Colonic mucosa (tissue), 4 donors: ENCODE measurements at regions of chr6 and their contacts with region 1.

Region 1: DNA sequence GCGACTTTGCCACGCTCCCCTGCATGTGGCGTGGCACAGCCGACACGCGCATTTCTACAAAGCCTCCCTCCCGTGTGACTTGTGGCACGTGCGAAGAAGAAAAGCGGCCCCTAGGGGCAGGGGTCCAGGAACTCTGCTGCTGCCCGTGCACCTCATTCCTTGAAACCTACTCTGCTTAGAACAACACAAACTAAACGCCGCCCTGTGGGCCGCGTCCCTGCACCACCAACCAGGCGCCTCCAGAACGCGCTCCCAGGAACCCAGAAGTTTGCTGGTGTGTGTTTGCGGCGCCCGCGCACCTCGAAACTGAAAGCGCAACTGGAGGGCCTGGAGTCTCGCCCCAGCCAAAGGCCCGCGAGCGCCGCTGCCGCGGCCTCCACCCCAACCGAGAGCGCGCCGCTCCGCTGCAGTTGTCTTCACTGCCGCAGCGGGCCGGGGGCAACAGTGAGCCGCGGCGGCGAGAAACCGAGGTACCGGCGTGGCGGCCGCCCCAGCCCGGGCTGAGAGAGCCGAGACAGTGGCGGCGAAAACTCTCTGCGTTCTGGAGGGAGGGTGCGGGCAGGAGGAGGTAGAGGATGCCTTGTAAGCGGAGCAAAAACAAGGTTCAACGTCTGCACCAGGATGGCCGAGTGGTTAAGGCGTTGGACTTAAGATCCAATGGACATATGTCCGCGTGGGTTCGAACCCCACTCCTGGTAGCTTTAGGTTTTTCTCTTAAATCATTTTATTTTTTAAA is 65.8 kb downstream of the STX11 start:
- DNase-seq: peak; percentile 95
- H3K4me3 ChIP-seq: peak overlapping the region; percentile 57
- H3K27ac ChIP-seq: peak overlapping the region; percentile 97
- H3K4me1 ChIP-seq: peaks cover 5% of the 10 kb centered on the region
- H3K27me3 ChIP-seq: no peaks in the 10 kb centered on the region
- CTCF ChIP-seq: peak; percentile 42

Region 2: DNA sequence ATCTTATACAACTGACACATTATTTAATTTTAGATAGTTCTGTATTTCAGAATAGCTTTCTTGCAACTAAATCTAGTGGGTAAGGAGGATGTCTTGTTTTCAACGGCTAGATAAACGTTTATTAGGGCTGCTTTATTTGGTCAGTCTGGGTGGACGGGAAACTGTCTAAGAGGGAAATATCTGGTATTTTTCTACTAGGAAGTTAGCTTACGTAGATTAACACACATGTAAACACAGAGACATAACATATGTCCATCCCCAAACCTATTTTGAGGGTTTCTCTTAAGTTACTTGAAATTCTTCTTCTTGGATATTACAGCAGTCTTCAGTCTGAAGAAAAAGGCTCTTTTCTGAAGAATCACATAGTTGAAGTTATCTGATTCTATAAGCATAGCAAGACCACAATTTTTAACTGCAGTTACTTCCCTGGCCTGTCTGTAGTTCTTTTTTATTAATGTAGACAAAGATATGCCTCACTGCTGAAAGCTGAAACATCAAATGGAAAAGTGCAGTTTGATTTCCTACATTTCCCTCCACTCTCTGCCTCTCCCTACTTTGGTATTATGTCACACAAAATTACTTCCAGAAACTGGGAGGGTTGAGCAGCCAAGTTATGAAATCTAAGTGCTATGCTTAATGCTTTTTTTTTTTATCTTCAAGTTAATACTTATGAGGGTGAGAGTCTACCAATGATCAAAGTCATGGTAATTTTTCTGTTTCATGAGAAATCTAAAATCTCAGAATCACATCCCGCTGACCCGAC is 245.5 kb before region 1 on chr6:
- intact Hi-C with region 1: no loop called
- DNase-seq: no peak
- H3K4me3 ChIP-seq: no peak overlapping the region
- H3K27ac ChIP-seq: no peak overlapping the region
- H3K4me1 ChIP-seq: peaks cover 4% of the 10 kb centered on the region
- H3K27me3 ChIP-seq: no peaks in the 10 kb centered on the region
- CTCF ChIP-seq: no peak

Region 3: GRCh38 chr6:144104898-144105487 is 111.1 kb before region 1 on chr6:
- intact Hi-C with region 1: loop called (anchors 5 kb)
- DNase-seq: peak; percentile 51
- H3K4me3 ChIP-seq: no peak overlapping the region
- H3K27ac ChIP-seq: no peak overlapping the region
- H3K4me1 ChIP-seq: no peaks in the 10 kb centered on the region
- H3K27me3 ChIP-seq: no peaks in the 10 kb centered on the region
- CTCF ChIP-seq: peak; percentile 55

Region 4: DNA sequence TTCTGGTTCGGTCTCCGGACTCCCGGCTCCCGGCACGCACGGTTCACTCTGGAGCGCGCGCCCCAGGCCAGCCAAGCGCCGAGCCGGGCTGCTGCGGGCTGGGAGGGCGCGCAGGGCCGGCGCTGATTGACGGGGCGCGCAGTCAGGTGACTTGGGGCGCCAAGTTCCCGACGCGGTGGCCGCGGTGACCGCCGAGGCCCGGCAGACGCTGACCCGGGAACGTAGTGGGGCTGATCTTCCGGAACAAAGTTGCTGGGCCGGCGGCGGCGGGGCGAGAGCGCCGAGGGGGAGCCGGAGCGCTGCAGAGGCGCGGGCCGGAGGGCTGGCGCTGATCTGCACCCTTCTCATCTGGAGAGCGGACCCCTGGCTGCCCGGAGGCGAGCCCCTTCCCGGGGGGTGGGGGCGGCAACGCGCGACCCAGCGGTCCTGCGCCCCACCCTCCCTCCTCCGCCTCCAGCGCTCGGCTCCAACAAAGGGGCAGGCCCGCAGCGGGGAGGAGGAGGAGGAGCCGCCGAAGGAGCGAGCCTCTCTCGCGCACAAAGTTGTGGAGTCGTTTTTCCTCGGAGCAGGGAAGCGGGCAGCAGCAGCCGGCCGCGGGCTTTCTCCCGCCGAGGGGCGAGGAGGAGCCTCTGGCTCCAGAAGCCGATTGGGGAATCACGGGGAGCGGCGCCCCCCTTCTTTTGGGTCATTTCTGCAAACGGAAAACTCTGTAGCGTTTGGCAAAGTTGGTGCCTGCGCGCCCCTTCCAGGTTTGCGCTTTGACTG is 68.9 kb after region 1 on chr6 and contains the start of gene UTRN:
- intact Hi-C with region 1: loop called (anchors 5 kb)
- DNase-seq: peak; percentile 87
- H3K4me3 ChIP-seq: peak within 1 kb of the TSS; percentile 90
- H3K27ac ChIP-seq: peak within 1 kb of the TSS; percentile 97
- H3K4me1 ChIP-seq: no peaks in the 10 kb centered on the region
- H3K27me3 ChIP-seq: no peaks in the 10 kb centered on the region
- CTCF ChIP-seq: no peak
- total RNA-seq, gene UTRN: 72.7 to 80.1 TPM